Lower lobe of right lung (tissue), 2 donors: ENCODE measurements at regions of chr16 and their contacts with region 1.

Region 1: DNA sequence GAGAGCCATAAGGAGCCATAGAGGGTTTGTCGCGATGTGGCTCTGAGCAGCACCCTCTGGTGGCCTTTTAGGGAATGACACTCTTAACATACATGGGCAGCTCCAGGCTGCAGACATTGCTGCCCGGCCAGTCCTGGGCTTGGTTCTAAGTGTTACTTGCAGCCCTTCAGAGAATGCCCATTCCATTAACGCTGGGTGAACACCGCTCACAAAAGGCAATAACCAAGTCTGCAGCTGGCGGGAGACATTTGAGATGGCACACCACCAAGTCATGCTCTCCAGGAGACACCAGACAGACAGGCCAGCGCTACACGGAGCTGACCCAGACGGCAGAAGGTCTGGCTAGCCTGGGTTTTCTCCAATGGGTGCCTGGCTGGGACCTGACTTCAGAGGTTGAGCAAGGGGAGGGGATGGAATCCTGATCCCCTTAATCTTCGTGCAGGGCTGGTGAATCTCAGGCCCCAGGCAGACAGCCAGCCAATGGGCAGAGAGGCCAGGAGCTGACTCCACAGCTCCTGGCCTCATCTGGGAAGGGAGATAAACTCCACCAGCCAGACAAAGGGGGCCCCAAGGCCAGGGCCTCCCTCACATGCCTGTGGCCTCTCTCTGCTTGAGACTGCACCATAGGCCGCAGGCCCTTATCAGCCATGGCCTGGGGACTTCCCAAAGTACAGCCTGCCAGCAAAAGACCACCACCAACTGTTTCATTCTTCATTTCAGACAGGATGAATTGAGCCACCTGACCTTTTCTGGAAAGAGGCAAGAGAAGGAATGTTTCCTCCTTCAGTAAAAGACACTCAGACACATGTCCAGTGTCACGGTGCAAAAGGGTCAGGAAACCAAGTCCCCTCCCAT is 58.8 kb downstream of the ZDHHC7 start:
- DNase-seq: peak; percentile 69
- ATAC-seq: peak; percentile 91 to 95
- H3K4me3 ChIP-seq: no peak overlapping the region
- H3K27ac ChIP-seq: peak overlapping the region; percentile 18
- H3K4me1 ChIP-seq: peaks cover 19% of the 10 kb centered on the region
- H3K27me3 ChIP-seq: peaks cover 4% of the 10 kb centered on the region
- CTCF ChIP-seq: peak; percentile 95

Region 2: GRCh38 chr16:84754353-84754856 is 198.2 kb before region 1 on chr16:
- intact Hi-C with region 1: loop called (anchors 10 kb)
- DNase-seq: no peak
- ATAC-seq: peak; percentile 86 to 87
- H3K4me3 ChIP-seq: no peak overlapping the region
- H3K27ac ChIP-seq: no peak overlapping the region
- H3K4me1 ChIP-seq: peaks cover 55% of the 10 kb centered on the region
- H3K27me3 ChIP-seq: no peaks in the 10 kb centered on the region
- CTCF ChIP-seq: peak; percentile 91